Activated CD4-positive, alpha-beta T cell treated with anti-CD3 and anti-CD28 coated beads for 36 hours (primary cell): ENCODE measurements at regions of chr10 and their contacts with region 1.

Region 1: DNA sequence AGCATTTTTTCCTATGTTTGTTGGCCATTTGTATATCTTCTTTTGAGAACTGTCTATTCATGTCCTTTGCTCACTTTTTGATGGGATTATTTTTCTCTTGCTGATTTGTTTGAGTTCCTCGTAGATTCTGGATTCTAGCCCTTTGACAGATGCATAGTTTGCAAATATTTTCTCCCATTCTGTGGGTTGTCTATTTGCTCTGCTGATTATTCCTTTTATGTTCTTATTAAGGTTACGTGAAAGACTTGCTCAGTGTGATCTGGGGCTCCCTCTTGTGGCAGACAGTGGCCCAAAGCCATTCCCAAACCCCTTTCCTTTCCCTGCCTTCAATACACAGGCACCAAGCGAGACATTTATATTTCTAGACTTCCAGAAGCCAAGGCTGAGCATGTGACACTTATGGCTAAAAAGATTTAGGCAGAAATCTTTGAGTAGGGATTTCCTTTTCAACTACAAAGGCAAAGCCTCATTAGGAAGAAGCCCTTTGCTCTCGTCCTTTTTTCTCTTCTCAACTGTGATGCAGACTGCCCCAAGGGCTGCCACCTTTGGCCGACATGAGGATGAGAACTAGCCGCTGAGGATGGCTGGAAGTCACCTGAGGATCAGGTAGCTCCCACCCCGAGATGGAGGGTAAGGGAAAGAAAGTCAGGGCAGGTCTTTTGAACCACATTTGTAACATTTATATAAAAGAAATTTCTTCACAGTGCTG is 23.6 kb downstream of the ST8SIA6 start:
- DNase-seq: peak; percentile 77
- ATAC-seq: no peak
- H3K4me3 Mint-ChIP-seq: no peak overlapping the region
- H3K27ac Mint-ChIP-seq: no peak overlapping the region
- H3K4me1 Mint-ChIP-seq: peaks cover 55% of the 10 kb centered on the region
- H3K27me3 Mint-ChIP-seq: peaks cover 1% of the 10 kb centered on the region

Region 2: DNA sequence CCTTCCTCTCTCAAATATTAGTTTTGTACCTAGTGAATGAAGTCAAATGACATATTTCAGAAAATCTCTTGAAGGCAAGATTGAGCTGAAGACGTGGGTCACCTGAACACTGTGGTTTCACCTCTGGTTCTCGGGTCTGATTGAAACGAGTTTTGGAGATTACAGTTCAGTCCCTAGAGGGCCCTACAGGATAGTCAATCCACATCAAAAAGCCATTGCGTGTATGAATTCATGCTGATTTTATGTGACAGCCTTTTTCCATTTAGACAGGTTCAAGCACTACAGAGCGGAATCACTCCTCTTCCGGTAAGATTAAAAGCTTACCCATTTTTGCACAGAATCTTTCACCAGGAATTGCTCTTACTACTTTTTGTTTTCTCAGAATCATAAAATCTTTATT is 140.6 kb before region 1 on chr10:
- CTCF ChIA-PET with region 1: interaction called, 16 read pairs
- POLR2A ChIA-PET with region 1: no interaction called
- intact Hi-C with region 1: loop called (anchors 1 kb)
- DNase-seq: peak; percentile 25
- ATAC-seq: peak; percentile 96
- H3K4me3 Mint-ChIP-seq: no peak overlapping the region
- H3K27ac Mint-ChIP-seq: no peak overlapping the region
- H3K4me1 Mint-ChIP-seq: peaks cover 12% of the 10 kb centered on the region
- H3K27me3 Mint-ChIP-seq: peaks cover 23% of the 10 kb centered on the region

Region 3: GRCh38 chr10:17409170-17409733 is 21.5 kb before region 1 on chr10:
- CTCF ChIA-PET with region 1: interaction called, 11 read pairs
- POLR2A ChIA-PET with region 1: no interaction called
- intact Hi-C with region 1: loop called in 1 of 2 experiments (anchors 1 kb)
- DNase-seq: no peak
- ATAC-seq: peak; percentile 44
- H3K4me3 Mint-ChIP-seq: no peak overlapping the region
- H3K27ac Mint-ChIP-seq: no peak overlapping the region
- H3K4me1 Mint-ChIP-seq: peaks cover 18% of the 10 kb centered on the region
- H3K27me3 Mint-ChIP-seq: no peaks in the 10 kb centered on the region

Region 4: GRCh38 chr10:17450032-17450431 is 19.2 kb after region 1 on chr10:
- CTCF ChIA-PET with region 1: interaction called, 37 read pairs
- POLR2A ChIA-PET with region 1: no interaction called
- intact Hi-C with region 1: no loop called
- DNase-seq: no peak
- ATAC-seq: no peak
- H3K4me3 Mint-ChIP-seq: no peak overlapping the region
- H3K27ac Mint-ChIP-seq: no peak overlapping the region
- H3K4me1 Mint-ChIP-seq: peaks cover 16% of the 10 kb centered on the region
- H3K27me3 Mint-ChIP-seq: peaks cover 19% of the 10 kb centered on the region